ENCODE measurements at regions of chr7 and their contacts with region 1.

Region 1: DNA sequence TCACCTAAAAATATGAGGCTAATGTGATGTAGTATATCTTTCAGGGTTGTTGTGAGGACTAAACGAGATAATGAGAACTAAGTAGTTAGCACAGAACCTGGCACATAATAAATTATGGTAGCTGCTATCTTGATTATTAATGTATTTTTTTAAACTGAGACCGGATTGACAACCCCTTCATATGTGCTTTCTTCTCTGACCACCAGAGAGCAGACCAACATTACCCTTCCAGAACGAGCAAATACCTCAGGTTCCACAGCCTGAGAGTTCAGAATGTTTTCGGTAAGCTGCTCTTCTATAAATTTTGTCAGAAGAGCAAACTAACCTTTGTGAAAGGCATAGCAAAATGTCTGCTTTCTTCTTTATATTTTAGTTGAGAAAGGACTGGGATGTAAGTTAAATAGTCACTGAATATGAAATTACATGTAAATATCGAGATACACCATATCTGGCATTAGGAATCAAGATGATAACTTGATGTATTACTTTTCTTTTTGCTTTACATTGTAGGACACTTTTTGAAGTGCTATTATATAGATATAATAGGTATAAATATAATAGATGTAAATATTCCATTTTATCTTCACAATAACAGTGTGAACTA is 13.6 kb upstream of the BPGM start:
- DNase-seq: peak; percentile 57 to 65 (median 62)
- H3K4me3 ChIP-seq: no peak overlapping the region
- H3K4me3 Mint-ChIP-seq: no peak overlapping the region
- H3K27ac ChIP-seq: no peak overlapping the region
- H3K27ac Mint-ChIP-seq: peak overlapping the region in 1 of 7 donors; percentile 19
- H3K4me1 ChIP-seq: peaks cover 17% of the 10 kb centered on the region
- H3K4me1 Mint-ChIP-seq: peaks cover 13 to 18% (median 16%) of the 10 kb centered on the region in 4 donors
- H3K27me3 ChIP-seq: no peaks in the 10 kb centered on the region
- H3K27me3 Mint-ChIP-seq: peaks cover 9 to 12% of the 10 kb centered on the region in 2 donors

Region 2: GRCh38 chr7:134058980-134059379 is 574.1 kb before region 1 on chr7:
- CTCF ChIA-PET with region 1: no interaction called
- POLR2A ChIA-PET with region 1: no interaction called
- intact Hi-C with region 1: no loop called
- DNase-seq: no peak
- H3K4me3 ChIP-seq: no peak overlapping the region
- H3K4me3 Mint-ChIP-seq: no peak overlapping the region
- H3K27ac ChIP-seq: no peak overlapping the region
- H3K27ac Mint-ChIP-seq: no peak overlapping the region
- H3K4me1 ChIP-seq: no peaks in the 10 kb centered on the region
- H3K4me1 Mint-ChIP-seq: no peaks in the 10 kb centered on the region
- H3K27me3 ChIP-seq: no peaks in the 10 kb centered on the region
- H3K27me3 Mint-ChIP-seq: no peaks in the 10 kb centered on the region

Region 3: DNA sequence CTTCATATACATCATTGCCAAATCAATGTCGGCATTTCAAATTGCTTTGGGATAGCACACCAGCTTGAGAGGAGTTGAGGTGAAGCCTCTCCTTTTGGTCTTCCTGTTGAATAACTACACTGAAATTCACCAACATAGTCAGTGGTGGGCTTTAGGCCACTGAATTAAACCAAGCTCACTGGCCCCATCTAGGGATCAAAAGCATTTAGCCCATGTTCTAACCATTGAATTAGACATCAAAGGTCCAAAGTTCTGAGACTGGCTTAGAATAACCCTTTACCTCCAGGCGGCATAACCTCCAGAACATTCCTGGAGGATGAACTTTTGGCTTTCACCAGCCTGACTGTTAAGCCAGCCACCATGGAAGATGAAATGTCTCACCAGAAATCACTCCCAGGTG is 68.2 kb after region 1 on chr7:
- CTCF ChIA-PET with region 1: interaction called, 174 read pairs
- POLR2A ChIA-PET with region 1: interaction called, 5 read pairs
- intact Hi-C with region 1: loop called (anchors 1 kb)
- DNase-seq: peak in 4 of 5 donors; percentile 18 to 21 (median 20)
- H3K4me3 ChIP-seq: no peak overlapping the region
- H3K4me3 Mint-ChIP-seq: no peak overlapping the region
- H3K27ac ChIP-seq: no peak overlapping the region
- H3K27ac Mint-ChIP-seq: no peak overlapping the region
- H3K4me1 ChIP-seq: no peaks in the 10 kb centered on the region
- H3K4me1 Mint-ChIP-seq: no peaks in the 10 kb centered on the region
- H3K27me3 ChIP-seq: no peaks in the 10 kb centered on the region
- H3K27me3 Mint-ChIP-seq: no peaks in the 10 kb centered on the region

Region 4: DNA sequence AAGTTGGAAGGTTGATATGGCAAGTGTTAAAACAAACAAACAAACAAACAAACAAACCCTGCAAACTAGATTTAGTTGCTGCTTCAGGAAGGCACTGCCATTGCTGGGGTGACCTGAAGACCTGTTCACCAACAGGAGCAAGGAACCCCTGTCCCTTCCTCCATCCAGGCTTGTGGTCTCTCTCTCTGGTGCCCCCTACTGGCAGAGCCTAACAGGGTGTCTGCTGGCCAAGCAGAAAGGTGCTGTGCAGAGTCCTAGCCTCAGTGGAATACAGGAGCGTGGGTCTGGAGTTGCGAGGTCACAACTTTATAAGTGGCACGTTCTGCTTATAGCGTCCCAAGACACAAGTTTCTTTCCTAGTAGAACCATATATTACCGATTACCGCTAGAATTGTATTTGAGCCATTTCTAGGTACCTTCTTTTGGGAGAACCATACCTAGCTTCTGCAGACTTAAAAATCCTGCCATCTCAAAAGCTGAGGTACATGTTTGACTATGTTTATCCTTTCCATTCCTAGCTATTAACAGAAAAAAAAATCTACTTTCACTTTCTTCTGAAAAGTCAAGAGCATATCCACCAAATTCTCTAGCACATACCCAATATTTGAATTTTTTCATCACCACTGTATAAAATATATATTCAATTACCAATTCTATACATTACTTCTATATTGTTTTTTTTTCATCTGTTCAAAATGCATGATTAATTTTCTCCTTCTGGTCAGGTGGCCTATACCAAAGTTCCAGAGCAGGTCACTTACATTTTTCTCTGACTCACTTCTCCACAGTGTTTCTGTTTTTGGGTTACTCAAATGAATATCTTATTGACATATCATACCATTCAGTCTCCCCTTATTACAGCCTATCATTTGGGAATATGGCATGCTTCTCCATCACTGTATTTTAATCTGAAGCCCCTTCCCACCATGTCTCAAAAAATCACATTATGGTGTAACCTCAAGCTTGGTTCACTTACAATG is 117.3 kb after region 1 on chr7:
- CTCF ChIA-PET with region 1: interaction called, 175 read pairs
- POLR2A ChIA-PET with region 1: no interaction called
- intact Hi-C with region 1: loop called (anchors 1 kb)
- DNase-seq: peak; percentile 40 to 64 (median 52)
- H3K4me3 ChIP-seq: no peak overlapping the region
- H3K4me3 Mint-ChIP-seq: no peak overlapping the region
- H3K27ac ChIP-seq: no peak overlapping the region
- H3K27ac Mint-ChIP-seq: no peak overlapping the region
- H3K4me1 ChIP-seq: no peaks in the 10 kb centered on the region
- H3K4me1 Mint-ChIP-seq: no peaks in the 10 kb centered on the region
- H3K27me3 ChIP-seq: no peaks in the 10 kb centered on the region
- H3K27me3 Mint-ChIP-seq: peaks cover 0 to 2% of the 10 kb centered on the region in 2 donors

Region 5: GRCh38 chr7:134943764-134944400 is 310.8 kb after region 1 on chr7:
- CTCF ChIA-PET with region 1: interaction called, 5 read pairs
- POLR2A ChIA-PET with region 1: no interaction called
- intact Hi-C with region 1: loop called (anchors 2 kb)
- DNase-seq: no peak
- H3K4me3 ChIP-seq: no peak overlapping the region
- H3K4me3 Mint-ChIP-seq: no peak overlapping the region
- H3K27ac ChIP-seq: no peak overlapping the region
- H3K27ac Mint-ChIP-seq: no peak overlapping the region
- H3K4me1 ChIP-seq: no peaks in the 10 kb centered on the region
- H3K4me1 Mint-ChIP-seq: peaks cover 0 to 5% (median 4%) of the 10 kb centered on the region in 4 donors
- H3K27me3 ChIP-seq: no peaks in the 10 kb centered on the region
- H3K27me3 Mint-ChIP-seq: peaks cover 1% of the 10 kb centered on the region in 2 donors

Region 6: DNA sequence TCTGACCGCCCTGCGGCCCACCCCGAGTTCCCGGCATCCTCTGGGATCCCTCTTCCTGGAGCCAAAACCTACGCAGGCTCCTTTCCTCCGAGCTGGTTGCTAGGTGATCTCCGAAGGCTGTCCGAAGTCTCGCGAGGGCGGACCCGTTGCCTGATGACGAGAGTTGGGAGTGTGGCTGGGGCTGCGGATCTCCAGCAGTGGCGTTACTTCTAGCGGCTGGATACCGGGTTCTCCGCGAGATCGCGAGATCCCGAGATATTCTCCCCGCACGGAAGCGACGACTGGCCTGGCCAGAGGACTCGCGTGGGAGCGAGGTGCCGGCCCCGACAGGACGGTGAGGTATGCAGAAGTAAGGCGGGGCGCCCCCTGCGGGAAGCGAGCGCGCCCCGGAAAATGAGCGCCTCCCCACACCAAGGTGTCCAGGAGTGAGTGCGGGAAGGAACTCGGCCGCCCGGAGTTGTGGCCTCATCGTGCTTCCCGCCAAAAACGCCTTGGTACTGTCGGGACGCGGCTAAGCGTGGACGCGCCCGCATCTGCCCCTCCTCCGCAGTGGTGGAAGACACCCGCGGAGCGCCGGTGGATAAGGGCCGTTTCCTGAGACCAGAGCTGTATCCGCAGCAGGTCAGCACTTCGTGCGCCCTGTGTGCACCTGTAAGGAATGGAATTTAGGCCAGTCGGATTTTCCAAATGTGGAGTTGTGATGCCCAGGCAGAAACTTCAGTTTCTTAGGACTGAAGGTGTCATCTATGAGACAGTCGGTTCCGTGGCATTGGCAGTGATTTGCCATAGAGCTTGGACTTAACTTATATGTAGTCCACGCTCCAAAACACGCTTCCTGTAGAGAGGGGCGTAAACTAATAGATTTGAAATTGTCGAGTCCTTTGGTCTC is 353.6 kb after region 1 on chr7 and contains the start of gene AGBL3:
- CTCF ChIA-PET with region 1: interaction called, 29 read pairs
- POLR2A ChIA-PET with region 1: no interaction called
- intact Hi-C with region 1: no loop called
- DNase-seq: peak; percentile 87 to 91 (median 88)
- H3K4me3 ChIP-seq: peak within 1 kb of the TSS; percentile 60 to 86
- H3K4me3 Mint-ChIP-seq: peak within 1 kb of the TSS; percentile 96 to 99 (median 98)
- H3K27ac ChIP-seq: peak within 1 kb of the TSS; percentile 80
- H3K27ac Mint-ChIP-seq: peak within 1 kb of the TSS; percentile 98 to 100 (median 98)
- H3K4me1 ChIP-seq: peaks cover 20% of the 10 kb centered on the region
- H3K4me1 Mint-ChIP-seq: peaks cover 26 to 41% (median 31%) of the 10 kb centered on the region in 4 donors
- H3K27me3 ChIP-seq: no peaks in the 10 kb centered on the region
- H3K27me3 Mint-ChIP-seq: no peaks in the 10 kb centered on the region
- total RNA-seq, gene AGBL3: 5.5 to 6.2 TPM